HCT116 (cell line): ENCODE measurements at regions of chr4 and their contacts with region 1.

Region 1: DNA sequence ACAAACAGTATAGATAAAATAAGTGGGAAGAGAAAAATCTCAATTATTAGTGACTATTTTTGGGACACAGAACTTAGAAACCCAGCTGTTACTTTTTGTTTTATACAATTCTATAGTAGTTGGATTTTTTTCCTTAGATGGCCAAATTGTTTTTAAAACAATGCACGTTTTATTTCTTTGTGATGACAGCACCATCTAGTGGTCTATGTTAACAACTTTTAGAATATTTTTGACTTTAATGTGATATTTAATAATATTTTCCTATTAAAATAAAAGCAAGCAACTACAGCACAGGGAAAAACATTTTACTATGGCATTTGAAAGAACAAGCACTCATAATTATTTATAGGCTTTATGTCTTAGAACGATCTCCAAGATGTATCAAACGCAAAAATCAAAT is 5.6 kb upstream of the SMIM31 start:
- DNase-seq: peak; percentile 13
- ATAC-seq: no peak; the same call in 1 of the 2 replicates
- H3K4me3 ChIP-seq: no peak overlapping the region
- H3K27ac ChIP-seq: no peak overlapping the region
- H3K4me1 ChIP-seq: no peaks in the 10 kb centered on the region
- H3K27me3 ChIP-seq: no peaks in the 10 kb centered on the region
- CTCF ChIP-seq: peak in 2 of 3 experiments; percentile 38 to 46; a peak in 4 of 6 replicates
- POLR2A ChIP-seq: no peak
- RAD21 ChIP-seq: peak; percentile 56

Region 2: GRCh38 chr4:163484906-163485305 is 1263.5 kb before region 1 on chr4:
- CTCF ChIA-PET with region 1: no interaction called
- POLR2A ChIA-PET with region 1: no interaction called
- RAD21 ChIA-PET with region 1: no interaction called
- intact Hi-C with region 1: loop called (anchors 10 kb)
- DNase-seq: peak; percentile 50
- ATAC-seq: peak; percentile 89
- H3K4me3 ChIP-seq: no peak overlapping the region
- H3K27ac ChIP-seq: no peak overlapping the region
- H3K4me1 ChIP-seq: no peaks in the 10 kb centered on the region
- H3K27me3 ChIP-seq: no peaks in the 10 kb centered on the region
- CTCF ChIP-seq: peak; percentile 50 to 78 (median 61); a peak in 5 of 6 replicates
- POLR2A ChIP-seq: no peak
- RAD21 ChIP-seq: peak; percentile 70